ENCODE measurements at regions of chr6 and their contacts with region 1.

Region 1: DNA sequence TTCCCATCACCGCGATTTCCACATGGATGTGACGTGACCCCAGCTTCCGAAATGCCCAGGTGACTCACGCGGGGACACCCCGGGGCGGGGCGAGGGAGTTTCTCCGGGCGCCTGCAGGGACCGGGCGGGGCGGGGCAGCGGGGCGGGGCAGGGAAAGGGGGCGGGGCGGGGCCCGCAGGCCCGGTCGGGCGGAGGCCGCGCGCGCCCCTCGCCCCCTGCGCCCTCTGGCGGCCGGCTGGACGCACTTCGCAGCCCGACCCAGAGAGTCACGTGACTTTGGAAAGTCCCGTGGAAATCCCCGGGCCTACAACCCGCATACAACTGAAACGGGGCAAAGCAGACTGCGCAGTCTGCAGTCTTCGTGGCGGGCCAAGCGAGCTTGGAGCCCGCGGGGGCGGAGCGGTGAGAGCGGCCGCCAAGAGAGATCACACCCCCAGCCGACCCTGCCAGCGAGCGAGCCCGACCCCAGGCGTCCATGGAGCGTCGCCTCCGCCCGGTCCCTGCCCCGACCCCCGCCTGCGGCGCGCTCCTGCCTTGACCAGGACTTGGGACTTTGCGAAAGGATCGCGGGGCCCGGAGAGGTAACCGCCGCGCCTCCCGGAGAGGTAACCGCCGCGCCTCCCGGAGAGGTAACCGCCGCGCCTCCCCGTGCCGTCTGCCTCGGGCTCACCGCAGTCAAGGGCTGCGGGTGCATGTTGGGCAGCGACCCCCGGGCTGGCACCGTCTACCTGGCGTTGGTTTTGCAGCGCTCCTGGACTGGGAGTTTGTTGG is at the start of gene TNFAIP3:
- DNase-seq: peak; percentile 97
- H3K4me3 ChIP-seq: peak within 1 kb of the TSS; percentile 57 to 69
- H3K27ac ChIP-seq: no peak within 1 kb of the TSS
- H3K4me1 ChIP-seq: peaks cover 0 to 8% of the 10 kb centered on the region in 2 experiments; a peak in 1 of 4 replicates
- H3K27me3 ChIP-seq: no peaks in the 10 kb centered on the region; the same call in 1 of the 2 replicates
- CTCF ChIP-seq: peak; percentile 56
- EP300 ChIP-seq: no peak
- RAD21 ChIP-seq: peak; percentile 27; the same call in 1 of the 2 replicates
- polyA plus RNA-seq, gene TNFAIP3: 1.0 and 1.1 TPM in 2 replicates

Region 2: GRCh38 chr6:137680705-137681346 is 186.3 kb before region 1 on chr6:
- CTCF ChIA-PET with region 1: no interaction called
- POLR2A ChIA-PET with region 1: no interaction called
- DNase-seq: no peak
- H3K4me3 ChIP-seq: no peak overlapping the region
- H3K27ac ChIP-seq: no peak overlapping the region
- H3K4me1 ChIP-seq: no peaks in the 10 kb centered on the region
- H3K27me3 ChIP-seq: no peaks in the 10 kb centered on the region
- CTCF ChIP-seq: no peak
- EP300 ChIP-seq: no peak
- RAD21 ChIP-seq: no peak

Region 3: DNA sequence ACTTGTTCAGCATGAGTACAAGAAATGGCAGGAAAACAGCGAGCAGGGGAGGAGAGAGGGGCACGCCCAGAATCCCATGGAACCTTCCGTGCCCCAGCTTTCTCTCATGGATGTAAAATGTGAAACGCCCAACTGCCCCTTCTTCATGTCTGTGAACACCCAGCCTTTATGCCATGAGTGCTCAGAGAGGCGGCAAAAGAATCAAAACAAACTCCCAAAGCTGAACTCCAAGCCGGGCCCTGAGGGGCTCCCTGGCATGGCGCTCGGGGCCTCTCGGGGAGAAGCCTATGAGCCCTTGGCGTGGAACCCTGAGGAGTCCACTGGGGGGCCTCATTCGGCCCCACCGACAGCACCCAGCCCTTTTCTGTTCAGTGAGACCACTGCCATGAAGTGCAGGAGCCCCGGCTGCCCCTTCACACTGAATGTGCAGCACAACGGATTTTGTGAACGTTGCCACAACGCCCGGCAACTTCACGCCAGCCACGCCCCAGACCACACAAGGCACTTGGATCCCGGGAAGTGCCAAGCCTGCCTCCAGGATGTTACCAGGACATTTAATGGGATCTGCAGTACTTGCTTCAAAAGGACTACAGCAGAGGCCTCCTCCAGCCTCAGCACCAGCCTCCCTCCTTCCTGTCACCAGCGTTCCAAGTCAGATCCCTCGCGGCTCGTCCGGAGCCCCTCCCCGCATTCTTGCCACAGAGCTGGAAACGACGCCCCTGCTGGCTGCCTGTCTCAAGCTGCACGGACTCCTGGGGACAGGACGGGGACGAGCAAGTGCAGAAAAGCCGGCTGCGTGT is 11.6 kb after region 1 on chr6:
- CTCF ChIA-PET with region 1: interaction called, 15 read pairs
- POLR2A ChIA-PET with region 1: no interaction called
- DNase-seq: peak; percentile 36
- H3K4me3 ChIP-seq: no peak overlapping the region
- H3K27ac ChIP-seq: no peak overlapping the region
- H3K4me1 ChIP-seq: no peaks in the 10 kb centered on the region
- H3K27me3 ChIP-seq: no peaks in the 10 kb centered on the region
- CTCF ChIP-seq: no peak
- EP300 ChIP-seq: no peak
- RAD21 ChIP-seq: no peak

Region 4: DNA sequence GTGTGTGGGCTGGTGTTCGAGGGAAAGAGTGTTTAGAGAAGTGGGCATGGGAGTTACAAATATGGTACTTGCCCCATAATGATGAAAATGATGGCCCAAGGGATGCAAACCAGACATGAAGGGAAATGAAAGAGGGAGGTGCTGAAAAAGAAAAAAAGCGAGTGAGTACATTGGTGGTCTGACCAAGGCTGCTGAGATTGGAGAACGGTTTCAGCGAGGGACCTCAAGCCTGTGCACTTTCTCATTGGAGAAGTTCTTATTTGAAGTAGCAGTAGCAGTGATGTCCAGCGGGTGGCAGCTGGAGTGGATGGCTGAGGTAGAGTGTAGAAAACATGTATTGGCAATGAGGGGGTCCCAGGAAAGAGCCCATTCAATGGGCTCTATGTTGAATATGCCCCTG is 54.7 kb after region 1 on chr6:
- CTCF ChIA-PET with region 1: no interaction called
- POLR2A ChIA-PET with region 1: no interaction called
- DNase-seq: no peak
- H3K4me3 ChIP-seq: no peak overlapping the region
- H3K27ac ChIP-seq: no peak overlapping the region
- H3K4me1 ChIP-seq: no peaks in the 10 kb centered on the region
- H3K27me3 ChIP-seq: peaks cover 3% of the 10 kb centered on the region; the same call in 1 of the 2 replicates
- CTCF ChIP-seq: no peak
- EP300 ChIP-seq: no peak
- RAD21 ChIP-seq: no peak